Mammary epithelial cell (primary cell): ENCODE measurements at regions of chr9 and their contacts with region 1.

Region 1: DNA sequence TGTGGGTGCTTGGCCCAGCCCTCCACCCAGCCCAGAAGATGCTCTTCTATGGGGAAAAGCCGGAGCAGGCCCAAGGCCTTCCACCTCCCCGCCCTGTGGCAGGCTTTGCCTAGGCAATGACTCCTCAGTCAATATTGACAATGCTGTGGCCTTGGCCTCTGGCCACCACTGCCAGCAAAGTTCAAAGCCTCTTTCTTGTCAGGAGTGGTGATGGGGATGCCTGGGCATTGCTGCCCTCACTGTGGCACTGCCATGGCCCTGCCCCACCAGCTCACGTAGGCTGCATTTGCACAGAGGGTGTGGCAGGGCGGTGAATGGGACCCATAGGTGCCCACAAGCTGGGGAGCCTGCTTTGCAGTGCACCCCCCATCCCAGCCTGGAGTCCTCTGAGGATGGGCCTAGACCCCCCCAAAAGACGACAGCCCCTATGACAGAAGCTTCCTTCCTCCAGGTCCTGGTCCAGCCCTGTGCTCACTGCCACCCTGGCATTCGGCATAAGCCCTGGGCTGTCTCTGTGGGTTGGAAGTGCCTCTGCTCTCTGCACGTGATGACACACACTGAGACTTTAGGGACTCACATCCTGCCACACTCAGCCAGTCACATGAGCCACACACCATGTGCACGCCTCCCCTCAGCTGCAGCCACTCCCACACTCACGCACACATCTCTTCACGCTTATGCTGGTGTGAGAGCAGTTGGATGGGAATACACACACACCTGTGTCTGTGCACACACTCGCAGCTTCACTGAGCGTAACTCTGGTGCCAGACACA is 31.1 kb downstream of the MORN5 start:
- DNase-seq: peak; percentile 62
- H3K4me3 ChIP-seq: no peak overlapping the region
- H3K27ac ChIP-seq: peak overlapping the region; percentile 51
- H3K4me1 ChIP-seq: peaks cover 24% of the 10 kb centered on the region
- H3K27me3 ChIP-seq: no peaks in the 10 kb centered on the region
- CTCF ChIP-seq: no peak

Region 2: DNA sequence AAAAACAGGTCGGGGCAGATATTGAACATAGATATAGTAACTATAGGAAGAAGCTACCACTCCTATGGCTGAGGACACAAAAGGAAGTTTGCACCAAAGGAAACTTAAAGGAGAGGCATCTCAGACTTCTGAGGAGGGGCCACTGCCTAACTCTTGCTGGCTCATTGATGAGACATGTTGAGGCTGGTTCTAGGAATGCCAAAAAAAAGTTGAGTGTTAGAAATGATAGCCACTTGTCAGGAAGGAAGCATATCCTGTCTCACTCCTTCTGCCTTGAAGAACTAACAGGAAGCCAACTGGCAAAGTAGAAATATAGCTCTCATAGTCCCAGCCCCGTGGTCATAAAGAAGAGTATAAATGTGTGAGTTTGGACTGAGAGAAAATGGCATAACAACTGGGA is 797.5 kb before region 1 on chr9:
- CTCF ChIA-PET with region 1: no interaction called
- dilution Hi-C with region 1: no loop called
- in situ Hi-C with region 1: no loop called
- intact Hi-C with region 1: no loop called
- DNase-seq: peak; percentile 78
- H3K4me3 ChIP-seq: no peak overlapping the region
- H3K27ac ChIP-seq: peak overlapping the region; percentile 54
- H3K4me1 ChIP-seq: peaks cover 35% of the 10 kb centered on the region
- H3K27me3 ChIP-seq: no peaks in the 10 kb centered on the region
- CTCF ChIP-seq: no peak

Region 3: DNA sequence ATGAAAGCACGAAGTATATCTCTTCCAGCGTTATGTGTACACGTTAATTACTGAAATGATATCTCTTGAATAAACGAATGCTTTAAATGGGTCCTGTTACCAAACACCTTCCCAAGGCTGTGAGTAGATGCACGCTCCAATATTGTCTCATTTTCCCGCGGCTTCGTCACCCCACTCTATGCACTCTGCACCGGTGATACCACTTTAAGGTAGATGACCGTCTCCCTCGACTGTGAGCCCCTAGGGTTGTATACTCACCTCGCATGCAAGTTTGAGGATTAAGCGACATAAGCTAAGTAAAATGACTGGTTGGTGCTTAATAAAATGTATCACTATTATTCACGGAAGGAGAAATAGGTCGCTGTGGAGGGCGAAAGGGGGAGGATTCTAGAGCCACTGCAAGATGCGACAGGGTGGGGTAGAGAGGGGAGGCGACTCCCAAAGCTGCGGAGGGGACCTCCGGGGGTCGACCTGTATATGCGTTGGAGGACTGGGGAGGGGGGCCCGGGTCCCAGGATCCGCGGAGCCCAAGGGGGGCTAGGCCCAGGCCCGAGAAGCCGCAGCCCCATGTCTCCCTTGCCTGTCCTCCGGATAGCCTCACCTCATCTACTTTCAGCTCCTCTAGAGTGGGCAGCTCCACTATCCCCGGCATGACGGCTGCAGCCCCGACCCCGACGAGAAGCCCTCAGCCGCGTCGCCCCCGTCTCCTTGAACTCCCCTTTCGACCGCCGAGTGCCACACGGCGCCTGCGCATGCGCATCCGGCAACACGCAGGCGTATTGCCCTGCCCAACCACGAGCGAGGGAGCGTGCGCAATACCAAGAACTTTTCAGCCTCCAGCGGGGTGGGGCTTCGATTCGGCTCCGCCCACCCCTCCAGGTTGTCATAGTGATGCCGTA is 31.5 kb before region 1 on chr9 and contains the starts of genes MORN5 and NDUFA8:
- CTCF ChIA-PET with region 1: no interaction called
- dilution Hi-C with region 1: no loop called
- in situ Hi-C with region 1: no loop called
- intact Hi-C with region 1: loop called (anchors 2 kb)
- DNase-seq: peak; percentile 92
- H3K4me3 ChIP-seq: peak within 1 kb of the TSS; percentile 69 to 95 (median 83)
- H3K27ac ChIP-seq: peak within 1 kb of the TSS; percentile 73
- H3K4me1 ChIP-seq: peaks cover 3% of the 10 kb centered on the region
- H3K27me3 ChIP-seq: no peaks in the 10 kb centered on the region
- CTCF ChIP-seq: peak in 1 of 2 donors; percentile 7
- total RNA-seq, gene MORN5: not detected
- total RNA-seq, gene NDUFA8: 26.0 to 77.4 TPM

Region 4: DNA sequence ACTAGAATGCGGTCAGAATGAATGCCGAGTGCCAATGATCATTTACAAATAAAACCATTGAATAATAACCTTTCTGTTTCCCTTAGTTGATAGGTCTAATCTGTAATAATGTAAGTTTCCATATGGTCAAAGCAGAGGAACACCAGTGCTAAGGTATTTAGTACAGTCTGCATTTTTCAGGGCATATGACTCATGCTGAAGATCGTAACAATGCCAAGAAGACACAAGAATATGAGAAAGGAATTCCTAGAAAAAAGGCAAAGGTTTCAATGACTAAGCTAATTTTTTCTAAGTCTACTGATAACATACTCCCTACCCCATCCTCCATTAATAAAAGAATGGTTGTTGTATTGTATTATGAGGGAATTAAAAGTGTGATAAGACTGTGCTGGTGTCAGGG is 389.6 kb after region 1 on chr9:
- CTCF ChIA-PET with region 1: no interaction called
- dilution Hi-C with region 1: no loop called
- in situ Hi-C with region 1: no loop called
- intact Hi-C with region 1: no loop called
- DNase-seq: peak; percentile 55
- H3K4me3 ChIP-seq: no peak overlapping the region
- H3K27ac ChIP-seq: no peak overlapping the region
- H3K4me1 ChIP-seq: no peaks in the 10 kb centered on the region
- H3K27me3 ChIP-seq: no peaks in the 10 kb centered on the region
- CTCF ChIP-seq: no peak